ENCODE measurements at regions of chr4 and their contacts with region 1.

Region 1: DNA sequence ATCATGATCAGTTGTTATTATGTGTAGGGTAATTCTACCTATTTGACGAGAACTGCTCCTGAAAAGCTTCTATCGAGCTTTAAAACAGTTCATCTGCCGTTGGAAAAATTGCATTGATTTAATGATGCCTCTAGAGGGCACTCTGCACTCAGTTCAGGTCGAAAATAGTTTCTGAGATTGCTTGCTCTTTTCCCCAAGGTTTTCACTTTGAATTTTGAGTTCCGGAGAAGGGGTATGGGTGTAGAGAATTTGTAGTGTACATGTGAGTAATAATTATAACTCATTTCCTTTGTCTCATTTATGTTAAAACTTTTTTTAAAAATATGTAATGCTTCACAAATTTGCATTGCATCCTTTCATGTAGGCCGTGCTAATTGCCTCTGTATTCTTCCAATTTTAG is 28.4 kb upstream of the TNIP3 start:
- DNase-seq: peak; percentile 75
- H3K4me3 Mint-ChIP-seq: peak overlapping the region; percentile 53
- H3K27ac Mint-ChIP-seq: no peak overlapping the region
- H3K4me1 Mint-ChIP-seq: peaks cover 45% of the 10 kb centered on the region
- H3K27me3 Mint-ChIP-seq: no peaks in the 10 kb centered on the region

Region 2: DNA sequence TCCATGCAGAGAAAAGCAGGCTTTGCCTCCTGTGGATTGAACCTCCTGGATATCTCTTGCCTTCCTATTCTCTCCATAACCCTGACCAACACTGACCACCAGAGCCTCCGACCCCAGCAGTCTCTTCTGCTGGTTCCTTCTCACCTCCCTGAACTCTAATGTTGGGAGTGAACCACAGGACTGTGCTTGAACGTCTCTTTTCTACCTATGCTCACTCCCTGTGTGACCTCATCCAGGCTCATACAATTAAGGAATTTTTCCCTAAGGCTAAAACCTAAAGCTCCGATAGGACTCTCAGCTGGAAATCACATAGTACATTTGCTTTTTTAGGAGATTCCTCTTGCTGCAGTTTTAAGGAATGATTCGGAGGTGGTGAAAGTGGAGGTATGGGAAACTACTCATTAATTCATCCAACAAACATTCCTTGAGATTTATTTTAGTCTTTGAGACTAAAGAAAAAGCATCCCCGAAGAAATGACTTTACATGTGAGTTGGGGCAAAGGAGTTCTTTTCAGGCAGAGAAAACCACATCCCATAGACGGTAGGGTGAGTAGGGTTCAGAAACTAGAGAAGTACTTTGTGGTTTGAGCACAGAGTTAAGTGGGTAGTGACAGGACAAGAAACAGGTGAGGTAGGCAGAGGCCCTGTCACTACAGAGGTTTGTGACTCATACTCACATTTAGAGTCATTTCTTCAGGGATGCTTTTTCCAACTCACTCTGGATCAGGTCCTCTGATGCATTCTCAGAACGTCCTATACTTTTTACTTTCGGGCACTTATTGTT is 151.0 kb before region 1 on chr4:
- intact Hi-C with region 1: loop called (anchors 5 kb)
- DNase-seq: peak; percentile 72
- H3K4me3 Mint-ChIP-seq: no peak overlapping the region
- H3K27ac Mint-ChIP-seq: peak overlapping the region; percentile 0
- H3K4me1 Mint-ChIP-seq: peaks cover 11% of the 10 kb centered on the region
- H3K27me3 Mint-ChIP-seq: peaks cover 49% of the 10 kb centered on the region

Region 3: GRCh38 chr4:121139533-121140222 is 52.8 kb before region 1 on chr4:
- intact Hi-C with region 1: no loop called
- DNase-seq: no peak
- H3K4me3 Mint-ChIP-seq: peak overlapping the region; percentile 26
- H3K27ac Mint-ChIP-seq: peak overlapping the region; percentile 78
- H3K4me1 Mint-ChIP-seq: peaks cover 45% of the 10 kb centered on the region
- H3K27me3 Mint-ChIP-seq: peaks cover 1% of the 10 kb centered on the region

Region 4: DNA sequence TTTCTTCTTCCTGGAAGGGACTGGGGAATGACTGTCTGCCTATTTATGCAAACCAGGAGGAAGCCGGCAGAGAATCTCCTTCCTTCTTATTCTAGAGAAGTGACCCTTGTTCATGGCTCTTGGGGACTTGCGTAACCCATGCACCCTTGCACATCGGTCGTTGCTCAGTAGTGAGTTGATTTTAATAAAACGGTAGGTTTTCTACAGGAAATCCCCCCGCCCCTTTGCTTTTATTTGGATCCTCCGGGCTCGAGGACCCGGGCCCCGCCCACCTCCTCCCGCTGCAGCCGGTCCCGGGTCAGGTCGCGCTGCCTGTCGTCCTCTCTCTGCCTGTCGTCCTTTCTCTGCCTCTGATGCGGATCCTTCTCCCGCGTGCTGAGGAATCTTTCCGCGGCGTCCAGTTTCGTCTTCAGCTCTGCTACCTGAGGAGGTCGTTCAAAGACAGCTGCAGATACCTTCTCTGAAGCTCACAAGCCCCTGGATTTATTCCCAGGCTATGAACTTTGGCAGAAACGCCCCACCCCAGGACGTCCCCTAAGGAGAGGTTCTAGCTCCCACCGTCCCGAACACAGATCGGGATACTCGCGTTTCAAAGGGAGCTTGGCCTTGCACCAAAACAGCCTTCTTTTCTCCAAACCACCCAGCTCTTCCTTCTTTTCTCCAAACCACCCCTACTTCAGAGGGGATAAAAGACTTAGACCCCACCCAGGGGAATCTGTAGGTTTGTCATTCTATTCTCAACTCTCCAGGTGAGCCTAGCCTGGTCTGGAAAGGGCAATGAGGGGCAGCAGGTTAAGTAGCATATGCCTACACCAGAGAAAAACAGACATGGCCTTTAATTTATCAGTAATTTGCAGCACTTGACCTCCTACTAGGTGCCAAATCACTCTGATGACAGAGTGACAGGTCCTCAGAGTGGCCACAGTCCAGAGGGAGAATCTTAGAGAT is 35.4 kb before region 1 on chr4:
- intact Hi-C with region 1: no loop called
- DNase-seq: peak; percentile 75
- H3K4me3 Mint-ChIP-seq: peak overlapping the region; percentile 80
- H3K27ac Mint-ChIP-seq: no peak overlapping the region
- H3K4me1 Mint-ChIP-seq: peaks cover 39% of the 10 kb centered on the region
- H3K27me3 Mint-ChIP-seq: peaks cover 19% of the 10 kb centered on the region

Region 5: DNA sequence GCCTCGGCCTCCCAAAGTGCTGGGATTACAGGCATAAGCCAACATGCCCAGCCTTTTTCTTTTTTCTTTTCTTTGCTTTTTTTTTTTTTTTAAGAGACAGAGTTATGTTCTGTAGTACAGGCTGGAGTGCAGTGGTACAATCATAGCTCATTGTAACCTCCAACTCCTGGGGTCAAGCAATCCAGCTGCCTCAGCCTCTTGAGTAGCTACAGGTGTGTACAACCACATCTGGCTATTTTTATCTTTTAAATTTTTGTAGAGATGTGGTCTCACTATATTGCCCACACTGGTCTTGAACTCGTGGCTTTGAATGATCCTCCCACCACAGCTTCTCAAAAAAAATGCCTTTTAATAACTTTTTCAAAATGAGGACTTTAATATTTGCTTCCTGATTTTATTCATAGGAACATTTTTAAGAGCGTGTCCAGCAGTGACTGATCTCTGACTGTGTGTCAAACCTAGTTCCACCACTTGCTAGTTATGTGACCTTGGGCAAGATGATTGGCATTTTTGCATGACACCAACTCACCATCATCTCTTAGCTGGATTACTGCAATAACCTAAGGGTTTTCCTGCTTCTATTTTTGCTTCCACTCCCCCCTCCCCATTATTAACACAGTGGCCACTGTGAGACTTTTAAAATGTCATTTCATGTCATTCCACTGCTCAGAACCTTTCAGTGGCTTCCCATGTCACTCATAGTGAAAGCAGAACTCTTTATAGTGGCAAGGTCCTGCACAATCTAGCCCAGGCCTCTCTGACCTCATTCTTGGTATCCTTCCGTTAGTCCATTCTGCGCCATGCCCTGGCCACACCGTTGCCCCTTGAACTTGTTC is 23.8 kb before region 1 on chr4:
- intact Hi-C with region 1: no loop called
- DNase-seq: no peak
- H3K4me3 Mint-ChIP-seq: no peak overlapping the region
- H3K27ac Mint-ChIP-seq: no peak overlapping the region
- H3K4me1 Mint-ChIP-seq: peaks cover 37% of the 10 kb centered on the region
- H3K27me3 Mint-ChIP-seq: no peaks in the 10 kb centered on the region

Region 6: GRCh38 chr4:121182296-121182695 is 10.2 kb before region 1 on chr4:
- intact Hi-C with region 1: loop called (anchors 1 kb)
- DNase-seq: peak; percentile 84
- H3K4me3 Mint-ChIP-seq: peak overlapping the region; percentile 79
- H3K27ac Mint-ChIP-seq: peak overlapping the region; percentile 90
- H3K4me1 Mint-ChIP-seq: peaks cover 55% of the 10 kb centered on the region
- H3K27me3 Mint-ChIP-seq: no peaks in the 10 kb centered on the region

Region 7: DNA sequence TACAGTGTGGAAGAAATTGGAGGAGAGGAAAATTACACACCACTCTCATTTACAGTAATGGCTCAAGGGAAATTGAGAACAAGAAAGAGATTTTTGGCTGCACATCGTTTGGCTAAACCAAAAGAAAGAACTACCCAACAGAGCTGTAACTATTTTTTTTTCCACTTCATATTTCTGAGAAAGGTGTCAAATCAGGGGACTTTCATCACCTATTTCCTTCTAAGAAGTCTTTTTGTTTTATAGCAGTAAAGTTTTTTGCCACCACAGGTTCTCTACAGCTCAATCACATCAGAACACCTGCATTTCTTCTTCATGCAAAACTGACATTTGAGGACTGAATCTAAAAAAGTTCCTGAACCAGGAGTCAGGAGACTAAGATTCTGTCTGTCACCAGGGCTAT is 29.1 kb after region 1 on chr4:
- intact Hi-C with region 1: no loop called
- DNase-seq: no peak
- H3K4me3 Mint-ChIP-seq: no peak overlapping the region
- H3K27ac Mint-ChIP-seq: peak overlapping the region; percentile 25
- H3K4me1 Mint-ChIP-seq: peaks cover 20% of the 10 kb centered on the region
- H3K27me3 Mint-ChIP-seq: peaks cover 2% of the 10 kb centered on the region

Region 8: DNA sequence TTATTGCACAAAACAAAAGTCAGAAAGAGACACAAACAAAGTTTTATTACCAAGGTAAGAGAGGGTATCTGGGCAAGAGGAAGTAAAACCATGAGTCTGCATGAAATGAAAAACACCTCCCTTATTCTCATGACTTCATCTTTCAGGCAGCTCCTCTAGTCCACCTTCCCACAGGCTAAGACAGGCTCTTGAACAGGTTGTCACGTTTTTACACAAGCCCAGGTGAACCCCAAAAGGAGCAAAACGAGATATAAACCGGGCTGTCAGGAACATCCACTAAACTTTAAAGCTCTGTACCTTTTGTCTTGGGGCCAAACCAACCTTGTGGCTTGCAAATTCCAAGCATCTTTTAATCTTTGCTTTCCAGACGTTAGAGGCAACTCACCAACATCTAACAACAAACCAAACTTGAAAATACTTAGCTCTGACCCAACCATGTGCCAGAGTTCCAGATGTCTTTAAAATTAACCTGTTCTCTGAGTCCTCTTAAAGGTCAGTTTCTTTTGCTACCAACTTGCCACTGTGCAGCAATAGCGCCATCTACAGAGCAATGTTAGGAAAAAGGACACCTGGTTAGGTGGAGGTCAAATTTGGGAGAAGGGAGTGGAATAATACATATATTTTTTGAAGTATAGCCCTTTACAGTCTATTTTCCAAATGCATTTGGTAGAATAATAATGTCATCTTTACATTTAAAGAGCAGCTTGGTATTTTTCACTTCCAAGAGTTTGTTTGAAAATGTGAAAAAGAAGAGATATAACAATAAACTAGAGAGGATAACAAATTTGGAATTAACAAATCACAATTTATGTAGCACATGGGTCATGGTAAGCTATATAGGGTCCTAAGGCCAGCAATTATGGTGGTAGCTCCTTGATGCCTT is 115.2 kb after region 1 on chr4:
- intact Hi-C with region 1: loop called (anchors 1 kb)
- DNase-seq: peak; percentile 84
- H3K4me3 Mint-ChIP-seq: no peak overlapping the region
- H3K27ac Mint-ChIP-seq: no peak overlapping the region
- H3K4me1 Mint-ChIP-seq: peaks cover 13% of the 10 kb centered on the region
- H3K27me3 Mint-ChIP-seq: peaks cover 17% of the 10 kb centered on the region

Region 9: DNA sequence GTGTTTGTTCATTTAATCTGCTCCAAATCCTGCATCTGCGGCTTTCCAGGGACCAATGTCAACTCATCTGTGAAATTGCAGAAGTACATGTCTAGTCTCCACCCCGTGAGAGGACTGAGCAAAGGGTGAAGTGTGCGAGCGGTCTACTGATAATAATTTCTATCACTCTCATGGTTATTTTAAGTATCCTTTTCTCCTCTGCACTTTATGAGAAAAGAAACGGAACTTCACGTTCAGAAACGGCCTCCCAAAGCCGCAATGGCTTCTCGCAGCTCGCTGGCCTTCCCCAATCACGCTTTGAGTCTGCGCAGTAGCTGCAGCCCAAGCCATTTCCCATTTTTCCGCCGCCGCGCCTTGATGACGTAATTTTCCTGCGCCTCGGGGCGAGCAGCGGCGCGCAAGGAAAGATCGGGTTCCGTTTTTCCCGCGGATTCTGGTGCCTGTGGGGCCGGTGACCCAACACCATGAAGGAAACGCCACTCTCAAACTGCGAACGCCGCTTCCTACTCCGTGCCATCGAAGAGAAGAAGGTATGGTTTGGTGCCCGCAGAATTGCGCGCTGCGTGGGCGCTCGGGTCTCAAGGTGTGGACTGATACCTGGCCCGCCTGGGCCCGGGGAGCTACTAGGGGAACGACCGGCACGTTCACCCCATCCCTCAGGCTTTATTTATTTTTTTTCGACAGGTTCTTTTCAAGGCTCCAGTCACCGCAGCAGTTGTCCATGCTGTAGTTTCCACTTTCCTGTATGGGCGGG is 608.7 kb after region 1 on chr4 and contains the start of gene EXOSC9:
- intact Hi-C with region 1: loop called (anchors 1 kb)
- DNase-seq: peak; percentile 99
- H3K4me3 Mint-ChIP-seq: peak within 1 kb of the TSS; percentile 83
- H3K27ac Mint-ChIP-seq: peak within 1 kb of the TSS; percentile 96
- H3K4me1 Mint-ChIP-seq: peaks cover 47% of the 10 kb centered on the region
- H3K27me3 Mint-ChIP-seq: peaks cover 3% of the 10 kb centered on the region
- total RNA-seq, gene EXOSC9: 76.9 and 78.8 TPM in 2 replicates

Measured in activated CD4-positive, alpha-beta T cell treated with anti-CD3 and anti-CD28 coated beads, Interleukin-2, amount 10 ng/mL, durations not matched to agents 24 days and 14 days (primary cell).